Caco-2 (cell line): ENCODE measurements at regions of chr2 and their contacts with region 1.

Region 1: GRCh38 chr2:24304098-24304497 is 56.2 kb downstream of the ITSN2 start:
- DNase-seq: no peak
- H3K4me3 ChIP-seq: no peak overlapping the region
- H3K4me3 Mint-ChIP-seq: no peak overlapping the region
- H3K27ac Mint-ChIP-seq: no peak overlapping the region
- H3K4me1 ChIP-seq: no peaks in the 10 kb centered on the region
- H3K4me1 Mint-ChIP-seq: no peaks in the 10 kb centered on the region
- H3K27me3 ChIP-seq: no peaks in the 10 kb centered on the region
- H3K27me3 Mint-ChIP-seq: no peaks in the 10 kb centered on the region
- CTCF ChIP-seq: no peak

Region 2: GRCh38 chr2:24021193-24021998 is 282.7 kb before region 1 on chr2:
- CTCF ChIA-PET with region 1: no interaction called
- POLR2A ChIA-PET with region 1: no interaction called
- intact Hi-C with region 1: no loop called
- DNase-seq: peak in 1 of 2 experiments; percentile 66
- H3K4me3 ChIP-seq: no peak overlapping the region
- H3K4me3 Mint-ChIP-seq: no peak overlapping the region
- H3K27ac Mint-ChIP-seq: no peak overlapping the region
- H3K4me1 ChIP-seq: peaks cover 6% of the 10 kb centered on the region
- H3K4me1 Mint-ChIP-seq: peaks cover 2% of the 10 kb centered on the region
- H3K27me3 ChIP-seq: no peaks in the 10 kb centered on the region
- H3K27me3 Mint-ChIP-seq: no peaks in the 10 kb centered on the region
- CTCF ChIP-seq: peak; percentile 33 to 73

Region 3: GRCh38 chr2:24337890-24338289 is 33.8 kb after region 1 on chr2:
- CTCF ChIA-PET with region 1: no interaction called
- POLR2A ChIA-PET with region 1: no interaction called
- intact Hi-C with region 1: loop called (anchors 5 kb)
- DNase-seq: no peak
- H3K4me3 ChIP-seq: no peak overlapping the region
- H3K4me3 Mint-ChIP-seq: no peak overlapping the region
- H3K27ac Mint-ChIP-seq: no peak overlapping the region
- H3K4me1 ChIP-seq: peaks cover 9% of the 10 kb centered on the region; the same call in 1 of the 2 replicates
- H3K4me1 Mint-ChIP-seq: peaks cover 31% of the 10 kb centered on the region
- H3K27me3 ChIP-seq: no peaks in the 10 kb centered on the region
- H3K27me3 Mint-ChIP-seq: no peaks in the 10 kb centered on the region
- CTCF ChIP-seq: peak in 1 of 2 experiments; percentile 23